ENCODE measurements at regions of chr9 and their contacts with region 1.

Region 1: DNA sequence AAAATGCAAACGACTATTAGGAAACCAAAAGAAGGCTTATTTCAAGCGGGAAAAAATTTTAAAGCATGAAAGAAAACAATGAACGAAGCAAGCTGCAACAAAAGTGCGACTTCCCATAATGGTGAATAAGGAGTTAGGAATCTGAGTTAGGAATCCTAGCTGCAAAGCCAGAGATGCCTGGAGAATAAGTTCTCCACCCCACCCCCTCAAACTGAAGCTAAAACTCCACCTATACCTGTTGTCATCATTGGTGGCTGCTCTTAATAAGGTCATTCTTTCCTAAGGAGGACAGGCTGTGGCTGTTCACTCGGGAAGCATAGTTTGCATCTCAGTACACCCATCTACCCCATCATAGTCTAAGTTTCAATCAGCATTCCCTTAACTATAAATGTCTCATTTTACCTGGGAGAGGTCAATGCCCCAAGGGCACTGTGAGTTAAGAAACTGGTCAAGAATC is 147.2 kb downstream of the GNAQ start:
- DNase-seq: no peak
- ATAC-seq: no peak
- H3K4me3 ChIP-seq: no peak overlapping the region
- H3K27ac ChIP-seq: no peak overlapping the region
- H3K4me1 ChIP-seq: no peaks in the 10 kb centered on the region
- H3K27me3 ChIP-seq: no peaks in the 10 kb centered on the region
- CTCF ChIP-seq: no peak
- EP300 ChIP-seq: no peak
- POLR2A ChIP-seq: no peak
- RAD21 ChIP-seq: no peak

Region 2: GRCh38 chr9:77871483-77871882 is 12.9 kb before region 1 on chr9:
- CTCF ChIA-PET with region 1: interaction called, 6 read pairs
- POLR2A ChIA-PET with region 1: interaction called, 5 read pairs
- RAD21 ChIA-PET with region 1: interaction called, 3 read pairs
- SMC1A ChIA-PET with region 1: interaction called, 18 read pairs
- in situ Hi-C with region 1: no loop called
- intact Hi-C with region 1: no loop called
- DNase-seq: no peak
- ATAC-seq: no peak
- H3K4me3 ChIP-seq: no peak overlapping the region
- H3K27ac ChIP-seq: no peak overlapping the region
- H3K4me1 ChIP-seq: no peaks in the 10 kb centered on the region
- H3K27me3 ChIP-seq: no peaks in the 10 kb centered on the region
- CTCF ChIP-seq: no peak
- EP300 ChIP-seq: no peak
- POLR2A ChIP-seq: no peak
- RAD21 ChIP-seq: no peak

Region 3: DNA sequence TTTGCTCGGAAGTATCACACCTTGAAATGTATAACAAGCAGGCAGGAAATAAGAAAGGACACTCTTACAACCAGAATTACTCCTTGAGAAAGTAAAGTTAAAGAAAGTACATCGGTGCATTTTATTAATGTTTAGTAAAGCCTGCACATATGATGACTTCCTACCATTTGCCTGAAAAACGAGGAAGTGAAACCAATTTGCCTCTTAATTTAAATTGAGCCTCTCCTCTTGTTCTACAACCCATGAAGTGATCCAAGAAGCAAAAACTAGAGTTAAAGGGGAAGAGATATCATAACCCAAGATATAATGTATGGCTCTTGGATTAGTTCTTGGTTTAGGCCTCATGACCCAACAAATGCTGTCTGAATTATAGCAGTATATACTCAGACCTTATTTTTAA is 51.6 kb after region 1 on chr9:
- CTCF ChIA-PET with region 1: no interaction called
- POLR2A ChIA-PET with region 1: no interaction called
- RAD21 ChIA-PET with region 1: no interaction called
- SMC1A ChIA-PET with region 1: no interaction called
- in situ Hi-C with region 1: no loop called
- intact Hi-C with region 1: loop called (anchors 5 kb)
- DNase-seq: no peak
- ATAC-seq: peak; percentile 77
- H3K4me3 ChIP-seq: no peak overlapping the region
- H3K27ac ChIP-seq: no peak overlapping the region
- H3K4me1 ChIP-seq: no peaks in the 10 kb centered on the region
- H3K27me3 ChIP-seq: no peaks in the 10 kb centered on the region; a peak in 1 of 4 replicates
- CTCF ChIP-seq: no peak
- EP300 ChIP-seq: no peak
- POLR2A ChIP-seq: no peak
- RAD21 ChIP-seq: no peak

Region 4: DNA sequence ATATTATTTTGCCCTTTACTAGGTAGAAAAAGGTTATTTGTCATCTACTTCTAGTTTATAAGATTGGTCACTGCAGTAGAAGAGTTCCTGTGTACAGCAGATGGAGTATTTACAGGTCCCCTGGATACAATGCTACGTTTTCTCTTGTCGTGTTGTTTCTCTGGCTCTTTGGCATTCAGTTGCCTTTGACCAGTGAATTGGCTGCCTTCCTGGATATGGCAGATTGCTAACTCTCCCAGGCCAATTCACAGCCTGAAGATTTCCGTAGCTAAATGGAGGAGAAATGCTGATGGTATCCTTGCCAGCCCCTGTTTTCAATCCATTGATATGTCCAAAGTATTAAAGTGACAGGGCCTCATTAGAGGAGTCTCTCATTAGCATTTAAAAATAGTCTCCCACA is 179.7 kb after region 1 on chr9:
- CTCF ChIA-PET with region 1: no interaction called
- POLR2A ChIA-PET with region 1: no interaction called
- RAD21 ChIA-PET with region 1: no interaction called
- SMC1A ChIA-PET with region 1: no interaction called
- in situ Hi-C with region 1: no loop called
- intact Hi-C with region 1: no loop called
- DNase-seq: no peak
- ATAC-seq: no peak
- H3K4me3 ChIP-seq: no peak overlapping the region
- H3K27ac ChIP-seq: no peak overlapping the region
- H3K4me1 ChIP-seq: no peaks in the 10 kb centered on the region
- H3K27me3 ChIP-seq: no peaks in the 10 kb centered on the region
- CTCF ChIP-seq: no peak
- EP300 ChIP-seq: no peak
- POLR2A ChIP-seq: no peak
- RAD21 ChIP-seq: no peak

Measured in GM12878 (cell line).